Heart left ventricle (tissue), 16 donors: ENCODE measurements at regions of chr10 and their contacts with region 1.

Region 1: DNA sequence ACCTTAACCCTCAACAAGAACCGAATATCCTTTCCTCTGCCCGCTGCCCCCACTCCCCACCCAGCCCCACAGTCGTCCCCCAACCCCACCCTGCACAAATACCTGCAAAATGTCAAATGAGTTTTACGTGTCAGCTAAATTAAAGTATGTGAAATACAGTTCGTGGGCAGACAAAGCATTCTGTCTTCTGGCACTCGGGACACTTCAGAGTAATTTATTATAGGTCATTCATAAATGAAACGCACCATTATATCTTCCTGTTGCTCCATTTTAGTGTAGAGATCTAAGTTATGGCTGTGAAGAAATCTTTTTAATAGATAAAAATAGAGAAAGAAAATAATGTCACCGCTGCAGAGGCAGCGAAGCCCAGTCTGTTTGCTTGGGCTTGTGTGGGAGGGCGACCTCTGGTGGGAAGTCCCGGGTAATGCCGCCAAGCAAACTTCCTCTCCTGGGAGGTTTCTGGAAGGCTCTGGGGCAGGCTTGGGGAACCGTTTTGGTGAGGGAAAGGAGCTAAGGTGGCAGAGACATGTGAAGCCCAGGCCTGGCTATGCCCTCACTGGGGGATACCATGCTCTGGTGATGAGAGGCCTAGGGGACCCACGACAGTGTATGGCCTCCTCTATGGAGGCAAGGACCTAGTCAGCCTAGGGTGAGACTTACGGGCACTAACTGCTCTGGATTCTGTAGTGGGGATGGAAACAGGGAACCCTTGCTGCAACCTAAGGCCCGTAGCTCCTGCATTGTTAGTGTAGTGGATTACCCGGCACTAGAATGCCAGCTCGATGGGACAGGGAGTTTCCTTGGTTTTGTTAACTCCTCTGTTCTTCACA is 604.9 kb downstream of the LRMDA start:
- DNase-seq: peak; percentile 72 to 86 (median 74)
- ATAC-seq: peak; percentile 79 to 94 (median 90)
- H3K4me3 ChIP-seq: peak overlapping the region in 6 of 12 donors; percentile 25 to 49 (median 38)
- H3K27ac ChIP-seq: peak overlapping the region in 1 of 12 donors; percentile 14
- H3K4me1 ChIP-seq: peaks cover 0 to 19% (median 7%) of the 10 kb centered on the region in 12 donors
- H3K27me3 ChIP-seq: no peaks in the 10 kb centered on the region
- CTCF ChIP-seq: peak; percentile 86 to 97 (median 94)
- POLR2A ChIP-seq: no peak

Region 2: GRCh38 chr10:75294866-75295701 is 741.2 kb before region 1 on chr10:
- intact Hi-C with region 1: loop called in 2 of 10 experiments (anchors 5 to 10 kb)
- DNase-seq: peak; percentile 77 to 88 (median 85)
- ATAC-seq: peak; percentile 50 to 89 (median 82)
- H3K4me3 ChIP-seq: peak overlapping the region; percentile 16 to 73 (median 64)
- H3K27ac ChIP-seq: peak overlapping the region; percentile 76 to 96 (median 90)
- H3K4me1 ChIP-seq: peaks cover 0 to 28% (median 19%) of the 10 kb centered on the region in 12 donors
- H3K27me3 ChIP-seq: peaks cover 0 to 5% (median 0%) of the 10 kb centered on the region in 9 donors
- CTCF ChIP-seq: peak in 10 of 12 donors; percentile 15 to 54 (median 38)
- POLR2A ChIP-seq: peak in 1 of 2 donors; percentile 63

Region 3: DNA sequence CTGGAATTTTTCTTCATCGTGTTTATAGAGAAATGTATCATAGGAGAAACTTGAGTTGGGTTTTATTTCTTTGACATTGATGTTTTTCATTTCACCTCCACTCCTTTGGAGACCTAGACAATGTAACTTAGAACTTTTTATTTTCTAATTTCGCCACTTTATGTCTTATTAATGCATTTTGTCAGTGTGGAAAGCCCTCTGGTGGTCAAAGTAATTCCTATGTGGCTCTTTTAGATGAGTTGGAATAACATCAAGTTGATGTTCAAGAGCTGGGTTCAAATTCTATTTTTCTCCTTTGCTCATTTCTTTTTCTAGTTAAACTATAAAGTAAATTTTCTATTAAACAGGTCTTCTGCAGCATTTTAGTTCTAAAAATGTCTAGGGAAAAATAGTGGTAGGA is 126.3 kb before region 1 on chr10:
- intact Hi-C with region 1: loop called in 1 of 10 experiments (anchors 10 kb)
- DNase-seq: no peak
- ATAC-seq: no peak
- H3K4me3 ChIP-seq: no peak overlapping the region
- H3K27ac ChIP-seq: no peak overlapping the region
- H3K4me1 ChIP-seq: no peaks in the 10 kb centered on the region
- H3K27me3 ChIP-seq: no peaks in the 10 kb centered on the region
- CTCF ChIP-seq: peak; percentile 37 to 67 (median 54)
- POLR2A ChIP-seq: no peak

Region 4: DNA sequence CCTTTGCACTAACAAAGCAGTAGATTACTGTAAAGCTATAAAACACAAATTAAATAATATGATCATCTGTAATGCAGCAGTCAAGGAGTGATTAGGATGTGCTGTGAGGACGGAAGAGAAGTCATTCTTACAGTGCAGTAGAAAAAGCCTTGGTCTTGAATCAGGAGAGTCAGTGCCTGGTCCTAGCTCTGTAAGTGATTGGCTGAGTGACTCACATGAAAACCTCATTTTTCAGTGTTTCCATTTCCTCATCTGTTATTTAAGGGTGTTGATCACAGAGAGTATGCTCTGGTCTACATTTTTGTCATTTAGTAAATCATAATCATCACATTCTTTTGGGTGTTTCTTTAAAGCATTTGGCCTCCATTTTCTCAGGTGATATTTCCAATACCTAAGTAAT is 112.9 kb after region 1 on chr10:
- intact Hi-C with region 1: no loop called
- DNase-seq: no peak
- ATAC-seq: no peak
- H3K4me3 ChIP-seq: no peak overlapping the region
- H3K27ac ChIP-seq: peak overlapping the region in 1 of 12 donors; percentile 73
- H3K4me1 ChIP-seq: peaks cover 0 to 3% (median 0%) of the 10 kb centered on the region in 12 donors
- H3K27me3 ChIP-seq: no peaks in the 10 kb centered on the region
- CTCF ChIP-seq: no peak
- POLR2A ChIP-seq: no peak

Region 5: DNA sequence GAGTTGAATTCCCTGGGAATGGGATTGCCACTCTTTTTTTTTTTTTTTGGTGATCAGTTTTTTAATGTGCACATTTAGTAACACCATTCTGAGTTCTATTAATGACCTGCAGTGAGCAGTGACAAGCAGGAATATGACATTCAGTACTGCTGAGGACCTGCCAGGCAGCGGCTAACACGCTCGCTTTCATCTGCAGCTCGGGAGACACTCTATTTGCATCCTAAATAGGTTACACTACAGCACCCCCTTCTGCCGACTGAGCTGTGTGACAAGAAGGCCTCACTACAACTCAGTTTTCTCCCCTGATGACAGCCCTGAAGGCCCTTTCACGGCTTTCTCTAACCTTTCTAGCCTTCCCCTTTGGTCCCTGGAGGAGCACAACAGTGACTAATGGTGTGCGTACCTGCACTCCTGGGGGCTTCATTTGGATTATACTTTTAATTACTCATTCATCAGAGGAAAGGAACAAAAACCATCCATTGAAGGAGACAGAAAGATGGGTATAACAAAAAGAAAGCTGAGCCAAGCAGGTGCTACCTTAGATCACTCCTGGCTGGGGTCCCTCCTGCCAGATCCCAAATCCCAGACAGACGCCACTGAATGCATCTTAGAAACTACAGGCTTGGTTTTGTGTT is 267.5 kb after region 1 on chr10:
- intact Hi-C with region 1: loop called in 7 of 10 experiments (anchors 5 to 10 kb)
- DNase-seq: peak; percentile 64 to 85 (median 74)
- ATAC-seq: peak; percentile 95 to 99 (median 98)
- H3K4me3 ChIP-seq: no peak overlapping the region
- H3K27ac ChIP-seq: peak overlapping the region in 3 of 12 donors; percentile 25 to 62 (median 58)
- H3K4me1 ChIP-seq: peaks cover 0 to 30% (median 15%) of the 10 kb centered on the region in 12 donors
- H3K27me3 ChIP-seq: no peaks in the 10 kb centered on the region
- CTCF ChIP-seq: peak; percentile 41 to 75 (median 61)
- POLR2A ChIP-seq: no peak

Region 6: GRCh38 chr10:77004917-77005564 is 968.7 kb after region 1 on chr10:
- intact Hi-C with region 1: loop called in 1 of 10 experiments (anchors 10 kb)
- DNase-seq: peak in 1 of 5 donors; percentile 14
- ATAC-seq: peak in 3 of 4 donors; percentile 58 to 77 (median 75)
- H3K4me3 ChIP-seq: no peak overlapping the region
- H3K27ac ChIP-seq: peak overlapping the region in 2 of 12 donors; percentile 5 to 57
- H3K4me1 ChIP-seq: peaks cover 0 to 9% (median 0%) of the 10 kb centered on the region in 12 donors
- H3K27me3 ChIP-seq: peaks cover 0 to 4% (median 0%) of the 10 kb centered on the region in 9 donors
- CTCF ChIP-seq: peak; percentile 61 to 88 (median 78)
- POLR2A ChIP-seq: no peak